A549 (cell line): ENCODE measurements at regions of chr9 and their contacts with region 1.

Region 1: GRCh38 chr9:38061326-38061977 is 7.6 kb downstream of the SHB start:
- DNase-seq: no peak
- ATAC-seq: no peak
- H3K4me3 ChIP-seq: no peak overlapping the region
- H3K27ac ChIP-seq: peak overlapping the region in 1 of 2 experiments; percentile 81; a peak in 4 of 6 replicates
- H3K4me1 ChIP-seq: peaks cover 99% of the 10 kb centered on the region
- CTCF ChIP-seq: no peak
- EP300 ChIP-seq: no peak
- POLR2A ChIP-seq: no peak
- RAD21 ChIP-seq: no peak

Region 2: GRCh38 chr9:38047301-38048251 is 13.9 kb before region 1 on chr9:
- CTCF ChIA-PET with region 1: interaction called, 52 read pairs
- POLR2A ChIA-PET with region 1: interaction called, 4 read pairs
- DNase-seq: peak; percentile 94
- ATAC-seq: peak; percentile 89 to 91
- H3K4me3 ChIP-seq: peak overlapping the region; percentile 25; the same call in 2 of the 3 replicates
- H3K27ac ChIP-seq: peak overlapping the region; percentile 94 to 97
- H3K4me1 ChIP-seq: peaks cover 64% of the 10 kb centered on the region
- CTCF ChIP-seq: no peak
- EP300 ChIP-seq: peak in 1 of 2 experiments; percentile 84; a peak in 3 of 5 replicates
- POLR2A ChIP-seq: no peak
- RAD21 ChIP-seq: peak in 1 of 2 experiments; percentile 26; a peak in 2 of 5 replicates